ENCODE measurements at regions of chr9 and their contacts with region 1.

Region 1: DNA sequence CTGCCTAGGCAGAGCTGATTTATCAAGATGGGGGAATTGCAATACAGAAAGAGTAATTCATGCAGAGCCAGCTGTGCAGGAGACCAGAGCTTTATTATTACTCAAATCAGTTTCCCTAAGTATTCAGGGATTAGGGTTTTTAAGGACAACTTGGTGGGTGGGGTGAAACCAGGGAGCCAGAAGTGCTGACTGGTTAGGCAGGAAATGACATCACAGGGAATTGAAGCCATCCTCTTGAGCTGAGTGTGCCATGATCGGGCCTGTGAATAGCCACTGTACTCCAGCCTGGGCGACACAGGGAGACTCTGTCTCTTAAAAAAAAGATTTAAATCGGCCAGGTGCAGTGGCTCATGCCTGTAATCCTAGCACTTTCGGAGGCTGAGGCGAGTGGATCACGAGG is 45.3 kb upstream of the CDK5RAP2 start:
- DNase-seq: no peak
- ATAC-seq: peak in 2 of 8 donors; percentile 42 to 69
- H3K4me3 ChIP-seq: no peak overlapping the region
- H3K27ac ChIP-seq: peak overlapping the region in 1 of 10 donors; percentile 10
- H3K4me1 ChIP-seq: peaks cover 0 to 26% (median 0%) of the 10 kb centered on the region in 9 donors
- H3K27me3 ChIP-seq: no peaks in the 10 kb centered on the region
- CTCF ChIP-seq: no peak

Region 2: GRCh38 chr9:120714088-120714845 is 89.0 kb after region 1 on chr9 and contains the start of gene MEGF9:
- intact Hi-C with region 1: loop called in 3 of 10 experiments (anchors 5 to 10 kb)
- DNase-seq: peak; percentile 98
- ATAC-seq: peak; percentile 97 to 99 (median 99)
- H3K4me3 ChIP-seq: peak within 1 kb of the TSS; percentile 48 to 97 (median 84)
- H3K27ac ChIP-seq: peak within 1 kb of the TSS; percentile 31 to 93 (median 80)
- H3K4me1 ChIP-seq: peaks cover 4 to 50% (median 38%) of the 10 kb centered on the region in 9 donors
- H3K27me3 ChIP-seq: no peaks in the 10 kb centered on the region
- CTCF ChIP-seq: peak in 1 of 9 donors; percentile 7
- total RNA-seq, gene MEGF9: 5.2 to 39.1 (median 9.6) TPM

Region 3: DNA sequence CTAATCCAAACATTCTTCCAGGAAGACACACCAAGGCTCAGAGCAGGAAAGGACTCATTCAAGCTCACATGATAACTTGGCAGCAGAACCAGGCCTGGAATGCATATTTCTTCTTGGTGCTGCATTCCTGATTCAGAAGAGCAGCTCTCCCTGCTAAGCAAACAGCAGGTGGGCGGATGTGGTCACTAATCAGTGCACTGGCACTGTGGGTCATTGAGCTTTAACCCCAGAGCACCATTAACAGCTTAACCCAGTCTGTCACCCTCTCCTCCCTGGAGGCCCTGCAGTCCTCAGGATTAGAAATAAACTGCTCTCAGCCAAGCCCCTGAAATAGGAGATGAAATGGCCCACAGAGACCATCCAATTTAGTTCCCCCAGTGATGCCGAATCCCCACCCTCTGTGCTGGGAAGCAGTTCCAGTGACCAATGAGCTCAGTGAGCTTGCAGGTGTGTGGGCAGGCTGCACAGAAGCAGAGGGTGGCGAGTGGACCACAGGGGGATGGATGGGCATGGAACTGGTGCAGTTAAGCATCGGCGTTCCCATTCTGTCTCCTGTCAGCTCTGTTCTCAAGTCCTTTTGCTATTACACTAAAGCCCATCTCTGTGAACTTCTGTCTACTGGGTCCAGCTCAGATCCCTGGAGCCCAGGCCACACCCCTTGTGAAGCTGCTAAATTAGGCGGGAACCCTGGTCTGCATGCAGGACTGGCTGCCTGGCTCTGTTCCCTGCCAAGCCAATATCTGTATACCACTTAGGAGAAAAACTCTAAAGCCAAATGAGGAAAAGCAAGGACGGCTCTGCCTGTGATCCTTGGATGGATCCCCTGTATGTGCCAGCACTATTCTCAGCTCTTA is 105.7 kb after region 1 on chr9:
- intact Hi-C with region 1: loop called in 1 of 10 experiments (anchors 5 kb)
- DNase-seq: peak; percentile 29 to 30
- ATAC-seq: peak in 7 of 8 donors; percentile 41 to 79 (median 72)
- H3K4me3 ChIP-seq: no peak overlapping the region
- H3K27ac ChIP-seq: peak overlapping the region in 3 of 10 donors; percentile 11 to 61 (median 24)
- H3K4me1 ChIP-seq: peaks cover 2 to 70% (median 16%) of the 10 kb centered on the region in 9 donors
- H3K27me3 ChIP-seq: no peaks in the 10 kb centered on the region
- CTCF ChIP-seq: no peak